A673 (cell line): ENCODE measurements at regions of chr18 and their contacts with region 1.

Region 1: GRCh38 chr18:76922107-76922506 is 99.8 kb downstream of the ZNF236 start:
- DNase-seq: peak; percentile 35
- H3K4me3 ChIP-seq: no peak overlapping the region
- H3K27ac ChIP-seq: no peak overlapping the region
- H3K4me1 ChIP-seq: no peaks in the 10 kb centered on the region
- H3K27me3 ChIP-seq: no peaks in the 10 kb centered on the region
- CTCF ChIP-seq: peak; percentile 58

Region 2: DNA sequence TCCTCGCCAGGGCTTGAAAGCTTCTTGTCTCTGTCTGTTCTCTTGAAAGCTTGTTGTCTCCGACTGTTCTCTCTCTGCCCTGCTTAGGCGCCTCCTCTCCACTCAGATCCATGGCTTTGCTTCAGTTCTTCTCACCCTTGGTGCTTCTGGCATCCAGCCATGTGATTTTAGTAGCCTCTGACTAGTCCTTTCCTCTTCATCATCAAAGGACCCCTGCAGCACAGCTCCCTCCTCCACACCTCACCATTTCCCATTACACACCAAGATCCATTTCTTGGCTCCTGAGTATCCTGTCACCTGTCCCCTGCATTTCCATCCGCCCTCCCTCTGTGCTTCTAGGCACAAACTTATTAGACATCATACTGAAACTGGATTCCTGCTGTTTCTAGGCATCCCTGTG is 40.4 kb before region 1 on chr18:
- CTCF ChIA-PET with region 1: interaction called, 10 read pairs
- POLR2A ChIA-PET with region 1: no interaction called
- intact Hi-C with region 1: no loop called
- DNase-seq: peak; percentile 4
- H3K4me3 ChIP-seq: no peak overlapping the region
- H3K27ac ChIP-seq: no peak overlapping the region
- H3K4me1 ChIP-seq: no peaks in the 10 kb centered on the region
- H3K27me3 ChIP-seq: no peaks in the 10 kb centered on the region
- CTCF ChIP-seq: no peak